ENCODE measurements at regions of chr6 and their contacts with region 1.

Region 1: GRCh38 chr6:30326526-30327260 is at the start of gene TRIM39:
- DNase-seq: peak; percentile 86 to 88
- ATAC-seq: peak; percentile 87 to 93 (median 90)
- H3K4me3 ChIP-seq: peak within 1 kb of the TSS; percentile 62 to 99 (median 87)
- H3K27ac ChIP-seq: peak within 1 kb of the TSS; percentile 94 to 99 (median 98)
- H3K4me1 ChIP-seq: peaks cover 0 to 52% (median 27%) of the 10 kb centered on the region in 9 donors
- H3K27me3 ChIP-seq: no peaks in the 10 kb centered on the region
- CTCF ChIP-seq: peak in 3 of 9 donors; percentile 5 to 16 (median 15)
- total RNA-seq, gene TRIM39: 6.3 to 10.6 (median 8.8) TPM

Region 2: GRCh38 chr6:28506807-28507475 is 1819.8 kb before region 1 on chr6:
- intact Hi-C with region 1: no loop called
- DNase-seq: no peak
- ATAC-seq: no peak
- H3K4me3 ChIP-seq: no peak overlapping the region
- H3K27ac ChIP-seq: no peak overlapping the region
- H3K4me1 ChIP-seq: no peaks in the 10 kb centered on the region
- H3K27me3 ChIP-seq: peaks cover 0 to 27% (median 0%) of the 10 kb centered on the region in 7 donors
- CTCF ChIP-seq: no peak

Region 3: DNA sequence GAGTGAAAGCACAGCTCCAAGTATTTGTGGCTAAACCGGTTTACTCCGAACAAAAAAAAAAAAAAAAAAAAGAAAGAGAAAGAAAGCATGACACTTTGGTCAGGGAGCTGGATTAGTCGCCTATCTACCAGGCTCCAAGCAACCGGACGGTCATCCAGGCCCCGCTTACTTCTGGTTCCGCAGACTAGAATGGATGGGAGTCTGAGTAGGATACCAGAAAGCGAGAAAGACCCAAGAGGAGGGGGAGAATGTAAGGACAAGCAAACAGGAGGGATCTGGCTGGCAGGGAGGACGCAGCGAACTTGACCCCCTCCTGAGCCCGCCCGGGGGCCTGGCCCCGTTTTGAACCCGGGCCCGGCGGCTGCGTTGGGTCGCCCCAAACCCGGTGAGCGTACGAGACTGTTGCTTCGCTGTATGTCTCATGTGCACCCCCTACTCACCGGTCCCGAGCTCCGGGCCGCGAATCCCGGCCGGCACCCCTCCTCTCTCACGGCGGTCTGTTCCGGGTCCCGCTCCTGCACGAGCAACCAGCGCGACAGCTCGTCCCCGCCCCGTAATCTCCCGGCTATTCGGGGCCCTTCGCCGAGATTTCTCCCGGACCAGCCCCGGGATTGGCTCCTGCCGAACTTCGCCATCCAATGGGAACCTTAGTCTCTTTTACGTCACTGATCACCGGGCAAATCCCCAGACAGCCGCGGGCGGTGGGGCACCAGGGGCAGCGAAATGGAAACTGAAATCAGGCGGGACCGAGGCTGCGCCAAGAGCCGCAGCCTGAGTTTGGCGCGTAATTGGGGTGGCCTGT is 113.6 kb before region 1 on chr6 and contains the start of gene TRIM26:
- intact Hi-C with region 1: loop called in 5 of 10 experiments (anchors 1 to 10 kb)
- DNase-seq: peak; percentile 96 to 98
- ATAC-seq: peak; percentile 95 to 98 (median 96)
- H3K4me3 ChIP-seq: peak within 1 kb of the TSS; percentile 68 to 91 (median 82)
- H3K27ac ChIP-seq: peak within 1 kb of the TSS; percentile 82 to 97 (median 94)
- H3K4me1 ChIP-seq: peaks cover 0 to 47% (median 30%) of the 10 kb centered on the region in 9 donors
- H3K27me3 ChIP-seq: no peaks in the 10 kb centered on the region
- CTCF ChIP-seq: no peak
- total RNA-seq, gene TRIM26: 15.5 to 29.0 (median 23.2) TPM

Region 4: DNA sequence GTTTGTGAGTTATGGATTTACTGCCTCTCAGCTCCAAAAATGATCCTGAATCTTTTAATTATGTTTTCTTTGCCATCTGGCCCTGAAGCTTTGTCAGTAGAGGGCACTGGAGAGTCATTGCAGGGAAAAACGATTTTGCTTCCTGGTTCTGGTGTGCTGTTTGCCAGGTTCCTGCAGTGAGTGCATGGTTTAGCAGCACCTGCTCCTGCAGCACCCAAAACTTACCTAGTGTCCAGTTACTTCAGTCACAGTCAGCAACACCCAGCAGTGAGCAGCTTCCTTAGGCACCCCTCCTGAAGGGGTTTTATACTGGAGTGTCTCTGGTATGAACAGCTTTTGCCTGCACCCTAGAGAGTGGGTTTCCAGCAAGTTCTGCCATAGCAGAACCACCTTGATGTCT is 107.4 kb before region 1 on chr6:
- intact Hi-C with region 1: loop called in 4 of 10 experiments (anchors 5 to 10 kb)
- DNase-seq: peak in 1 of 2 donors; percentile 30
- ATAC-seq: peak in 4 of 8 donors; percentile 30 to 59 (median 47)
- H3K4me3 ChIP-seq: no peak overlapping the region
- H3K27ac ChIP-seq: no peak overlapping the region
- H3K4me1 ChIP-seq: peaks cover 0 to 15% (median 0%) of the 10 kb centered on the region in 9 donors
- H3K27me3 ChIP-seq: no peaks in the 10 kb centered on the region
- CTCF ChIP-seq: peak; percentile 52 to 91 (median 82)

Region 5: GRCh38 chr6:30259140-30260035 is 67.3 kb before region 1 on chr6:
- intact Hi-C with region 1: loop called in 1 of 10 experiments (anchors 5 kb)
- DNase-seq: peak; percentile 56 to 81
- ATAC-seq: peak; percentile 94 to 97 (median 96)
- H3K4me3 ChIP-seq: peak overlapping the region; percentile 48 to 99 (median 89)
- H3K27ac ChIP-seq: peak overlapping the region in 9 of 10 donors; percentile 56 to 91 (median 79)
- H3K4me1 ChIP-seq: peaks cover 0 to 17% (median 7%) of the 10 kb centered on the region in 9 donors
- H3K27me3 ChIP-seq: peaks cover 0 to 20% (median 0%) of the 10 kb centered on the region in 7 donors
- CTCF ChIP-seq: peak in 7 of 9 donors; percentile 17 to 59 (median 31)